ENCODE measurements at regions of chr17 and their contacts with region 1.

Region 1: DNA sequence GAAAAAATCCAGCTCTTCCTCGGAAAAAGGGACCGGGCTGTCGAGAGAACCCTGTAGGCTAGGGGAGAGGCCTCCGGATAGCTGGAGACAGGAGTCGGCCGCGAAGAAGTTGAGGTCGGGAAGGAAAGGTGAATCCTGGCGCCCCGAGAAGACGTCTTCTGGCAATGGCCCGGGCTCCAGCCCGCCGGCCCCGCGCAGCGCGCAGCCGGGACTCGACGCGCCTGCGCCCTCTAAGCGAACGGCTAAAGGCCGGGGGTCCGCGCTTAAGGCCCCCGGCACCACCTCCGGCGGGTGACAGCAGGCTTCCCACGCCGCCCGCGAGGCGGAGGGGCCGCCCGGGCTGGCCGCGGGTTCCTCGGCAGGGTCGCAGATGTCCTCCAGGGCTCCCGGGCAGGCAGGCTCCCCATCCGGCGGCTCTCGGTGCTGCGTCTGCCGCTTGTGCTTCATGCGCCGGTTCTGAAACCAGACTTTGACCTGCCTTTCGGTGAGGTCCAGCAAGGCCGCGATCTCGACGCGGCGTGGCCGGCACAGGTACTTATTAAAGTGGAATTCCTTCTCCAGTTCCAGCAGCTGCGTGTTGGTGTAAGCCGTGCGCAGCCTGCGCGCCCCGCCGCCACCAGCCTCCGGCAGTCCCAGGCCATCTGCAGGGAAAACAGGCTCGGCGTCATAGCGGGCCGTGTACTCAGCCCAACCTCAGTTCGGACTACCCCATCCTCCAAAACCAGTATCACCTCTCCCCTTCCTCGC is 1.6 kb downstream of the HOXB2 start:
- DNase-seq: peak; percentile 73
- H3K4me3 Mint-ChIP-seq: peak overlapping the region; percentile 96
- H3K27ac Mint-ChIP-seq: peak overlapping the region; percentile 100
- H3K4me1 Mint-ChIP-seq: peaks cover 55% of the 10 kb centered on the region
- H3K27me3 Mint-ChIP-seq: peaks cover 9% of the 10 kb centered on the region

Region 2: DNA sequence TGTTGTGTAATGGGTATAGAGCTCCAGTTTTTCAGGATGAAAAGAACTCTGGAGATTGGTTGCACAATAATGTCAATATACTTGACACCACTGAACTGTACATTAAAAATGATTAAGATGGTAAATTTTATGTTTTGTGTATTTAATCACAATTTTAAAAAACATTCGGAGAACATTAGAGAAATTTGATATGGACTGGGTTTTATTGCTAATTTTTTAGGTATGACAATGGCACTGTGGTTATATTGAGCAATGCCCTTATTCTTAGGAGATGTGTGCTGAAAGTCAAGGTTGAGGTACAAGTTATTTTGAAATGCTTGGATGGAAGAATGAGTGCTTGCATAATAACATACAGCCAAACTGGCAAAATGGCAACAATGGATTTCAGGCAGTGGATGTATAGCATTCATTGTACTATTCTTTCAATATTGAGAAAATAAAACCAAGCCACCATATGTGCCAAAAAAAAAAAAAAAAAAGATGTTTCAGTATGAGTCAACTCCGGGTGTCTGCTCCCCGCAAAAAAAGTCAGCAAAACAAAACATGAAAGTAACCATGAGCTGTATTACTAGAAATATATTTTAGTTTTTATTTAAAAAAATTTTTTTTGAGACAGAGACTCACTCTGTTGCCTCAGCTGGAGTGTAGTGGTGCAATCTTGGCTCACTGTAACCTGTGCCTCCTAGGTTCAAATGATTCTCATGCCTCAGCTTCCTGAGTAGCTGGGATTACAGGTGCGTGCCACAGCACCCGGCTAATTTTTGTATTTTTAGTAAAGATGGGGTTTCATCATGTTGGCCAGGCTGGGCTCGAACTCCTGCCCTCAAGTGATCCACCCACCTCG is 32.3 kb before region 1 on chr17:
- CTCF ChIA-PET with region 1: interaction called, 6 read pairs
- intact Hi-C with region 1: loop called (anchors 2 kb)
- DNase-seq: peak; percentile 71
- H3K4me3 Mint-ChIP-seq: peak overlapping the region; percentile 22
- H3K27ac Mint-ChIP-seq: peak overlapping the region; percentile 89
- H3K4me1 Mint-ChIP-seq: peaks cover 39% of the 10 kb centered on the region
- H3K27me3 Mint-ChIP-seq: no peaks in the 10 kb centered on the region

Region 3: GRCh38 chr17:48577946-48578615 is 34.8 kb after region 1 on chr17 and contains the start of gene HOXB4:
- CTCF ChIA-PET with region 1: interaction called, 4 read pairs
- intact Hi-C with region 1: loop called (anchors 1 kb)
- DNase-seq: peak; percentile 84
- H3K4me3 Mint-ChIP-seq: peak within 1 kb of the TSS; percentile 87
- H3K27ac Mint-ChIP-seq: peak within 1 kb of the TSS; percentile 66
- H3K4me1 Mint-ChIP-seq: peaks cover 46% of the 10 kb centered on the region
- H3K27me3 Mint-ChIP-seq: peaks cover 51% of the 10 kb centered on the region
- total RNA-seq, gene HOXB4: 2.3 to 2.5 TPM

Region 4: GRCh38 chr17:48671697-48672171 is 128.5 kb after region 1 on chr17:
- CTCF ChIA-PET with region 1: no interaction called
- intact Hi-C with region 1: no loop called
- DNase-seq: peak; percentile 79
- H3K4me3 Mint-ChIP-seq: no peak overlapping the region
- H3K27ac Mint-ChIP-seq: no peak overlapping the region
- H3K4me1 Mint-ChIP-seq: no peaks in the 10 kb centered on the region
- H3K27me3 Mint-ChIP-seq: peaks cover 14% of the 10 kb centered on the region

Measured in activated naive CD4-positive, alpha-beta T cell treated with anti-CD3 and anti-CD28 coated beads for 36 hours (primary cell).